CD8-positive, alpha-beta memory T cell (primary cell): ENCODE measurements at regions of chr19 and their contacts with region 1.

Region 1: GRCh38 chr19:12965017-12965811 is 4.2 kb upstream of the DAND5 start:
- DNase-seq: peak; percentile 71 to 83 (median 72)
- H3K4me3 ChIP-seq: peak overlapping the region; percentile 93
- H3K4me3 Mint-ChIP-seq: peak overlapping the region; percentile 17 to 92 (median 89)
- H3K27ac ChIP-seq: peak overlapping the region; percentile 64
- H3K27ac Mint-ChIP-seq: peak overlapping the region in 6 of 8 donors; percentile 1 to 86 (median 78)
- H3K4me1 ChIP-seq: no peaks in the 10 kb centered on the region
- H3K4me1 Mint-ChIP-seq: peaks cover 5 to 8% (median 5%) of the 10 kb centered on the region in 3 donors
- H3K27me3 ChIP-seq: no peaks in the 10 kb centered on the region
- H3K27me3 Mint-ChIP-seq: peaks cover 0 to 3% of the 10 kb centered on the region in 2 donors

Region 2: DNA sequence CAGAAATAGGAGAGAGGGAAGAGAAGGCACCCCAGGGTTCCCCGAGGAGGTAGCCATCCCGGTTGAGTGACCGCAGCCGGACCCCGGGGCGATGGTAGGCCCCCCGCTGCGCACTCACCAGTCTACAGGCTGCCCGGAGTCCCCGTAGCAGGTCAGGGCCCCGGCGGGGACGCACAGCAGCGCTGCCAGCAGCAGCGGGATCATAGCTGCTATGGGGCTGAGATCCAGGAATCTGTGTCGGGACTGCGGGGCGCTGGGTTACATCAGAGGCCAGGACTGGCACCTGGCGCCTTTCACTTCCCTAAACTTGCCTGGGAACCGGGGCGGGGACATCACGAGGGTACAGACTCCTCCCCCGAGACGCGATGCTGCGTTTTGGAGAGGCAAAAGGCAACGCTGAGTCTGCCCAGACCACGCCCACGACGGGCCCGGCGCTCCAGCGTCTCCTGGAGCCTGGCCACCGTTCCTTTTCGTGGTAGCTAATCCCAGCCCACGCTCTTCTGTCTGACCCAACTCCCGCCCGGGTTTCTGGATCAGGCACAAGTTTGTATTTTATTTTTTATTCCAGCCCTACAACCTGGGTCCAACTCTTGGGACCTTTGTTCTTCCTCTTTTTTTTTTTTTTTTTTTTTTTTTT is 83.9 kb before region 1 on chr19 and contains the start of gene DNASE2:
- CTCF ChIA-PET with region 1: interaction called, 117 read pairs
- POLR2A ChIA-PET with region 1: interaction called, 7 read pairs
- DNase-seq: peak; percentile 80 to 89 (median 84)
- H3K4me3 ChIP-seq: peak within 1 kb of the TSS; percentile 89
- H3K4me3 Mint-ChIP-seq: peak within 1 kb of the TSS; percentile 87 to 96 (median 89)
- H3K27ac ChIP-seq: peak within 1 kb of the TSS; percentile 83
- H3K27ac Mint-ChIP-seq: peak within 1 kb of the TSS; percentile 80 to 96 (median 92)
- H3K4me1 ChIP-seq: peaks cover 17% of the 10 kb centered on the region
- H3K4me1 Mint-ChIP-seq: peaks cover 23 to 39% (median 26%) of the 10 kb centered on the region in 3 donors
- H3K27me3 ChIP-seq: no peaks in the 10 kb centered on the region
- H3K27me3 Mint-ChIP-seq: no peaks in the 10 kb centered on the region
- total RNA-seq, gene DNASE2: 20.7 to 22.4 TPM

Region 3: DNA sequence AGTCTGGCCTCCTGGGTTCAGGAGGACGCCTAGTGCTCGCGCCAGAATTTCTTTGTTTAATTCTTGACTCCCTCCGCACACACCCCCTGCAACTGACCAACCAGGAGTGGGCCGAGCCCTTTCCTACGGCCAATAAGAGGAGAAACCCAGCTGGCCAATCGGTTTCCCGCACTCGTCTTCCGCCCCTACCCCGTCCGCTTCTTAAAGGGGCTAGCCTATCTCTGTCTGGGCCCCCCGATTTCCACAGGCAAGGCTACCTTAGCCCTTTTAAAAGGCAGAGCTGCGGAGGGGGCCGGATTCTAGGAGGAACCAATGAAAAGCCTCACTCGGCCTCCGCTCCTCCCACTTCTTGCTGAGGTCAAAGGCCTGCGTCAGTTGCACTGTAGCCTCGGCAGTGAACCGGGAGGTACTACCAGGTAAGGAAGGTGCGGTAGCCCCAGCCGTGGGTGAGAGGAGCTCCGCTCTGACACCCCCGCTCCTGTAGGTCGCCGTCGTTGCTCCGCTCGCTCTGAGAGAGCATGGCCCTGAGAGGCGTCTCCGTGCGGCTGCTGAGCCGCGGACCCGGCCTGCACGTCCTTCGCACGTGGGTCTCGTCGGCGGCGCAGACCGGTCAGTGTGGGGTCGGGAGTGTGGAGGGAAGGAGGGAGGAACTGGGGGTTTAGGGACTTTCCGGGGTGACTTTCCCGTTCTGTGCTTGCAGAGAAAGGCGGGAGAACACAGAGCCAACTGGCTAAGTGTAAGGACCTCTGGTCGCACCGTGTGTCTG is 74.2 kb before region 1 on chr19 and contains the start of gene GCDH:
- CTCF ChIA-PET with region 1: interaction called, 117 read pairs
- POLR2A ChIA-PET with region 1: interaction called, 7 read pairs
- DNase-seq: peak; percentile 92 to 98 (median 97)
- H3K4me3 ChIP-seq: peak within 1 kb of the TSS; percentile 87
- H3K4me3 Mint-ChIP-seq: peak within 1 kb of the TSS; percentile 93 to 100 (median 98)
- H3K27ac ChIP-seq: peak within 1 kb of the TSS; percentile 69
- H3K27ac Mint-ChIP-seq: peak within 1 kb of the TSS; percentile 82 to 99 (median 98)
- H3K4me1 ChIP-seq: peaks cover 12% of the 10 kb centered on the region
- H3K4me1 Mint-ChIP-seq: peaks cover 25 to 45% (median 27%) of the 10 kb centered on the region in 3 donors
- H3K27me3 ChIP-seq: no peaks in the 10 kb centered on the region
- H3K27me3 Mint-ChIP-seq: peaks cover 0 to 4% of the 10 kb centered on the region in 2 donors
- total RNA-seq, gene GCDH: 59.4 to 60.1 TPM

Region 4: DNA sequence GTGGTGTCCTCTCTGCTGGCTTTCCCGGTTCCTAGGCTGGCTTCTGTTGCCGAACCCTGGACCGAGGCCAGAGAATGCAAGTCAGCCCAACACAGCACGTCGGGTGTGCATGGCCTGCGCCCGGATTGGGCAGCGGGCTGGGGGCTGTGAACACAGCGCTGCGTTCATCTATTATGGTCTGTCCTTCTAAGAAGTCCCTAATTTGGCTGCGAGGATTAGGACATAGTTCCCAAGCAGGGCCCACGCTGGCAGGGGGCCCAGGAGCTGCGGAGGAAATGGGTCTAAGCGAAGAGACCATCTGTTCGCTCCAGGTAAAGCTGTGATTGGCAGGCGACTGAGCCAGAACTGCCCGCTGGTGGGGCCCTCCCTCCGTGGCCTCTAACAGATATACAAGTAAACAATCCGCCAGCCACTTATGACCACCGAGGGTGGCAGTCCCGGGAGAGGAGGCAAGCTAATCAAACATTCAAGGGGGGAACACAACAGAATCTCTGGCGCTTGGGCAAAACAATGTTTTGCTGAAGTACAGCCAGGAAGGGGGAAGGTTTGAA is 52.1 kb before region 1 on chr19:
- CTCF ChIA-PET with region 1: interaction called, 10 read pairs
- POLR2A ChIA-PET with region 1: no interaction called
- DNase-seq: no peak
- H3K4me3 ChIP-seq: no peak overlapping the region
- H3K4me3 Mint-ChIP-seq: no peak overlapping the region
- H3K27ac ChIP-seq: no peak overlapping the region
- H3K27ac Mint-ChIP-seq: peak overlapping the region in 3 of 8 donors; percentile 51 to 93 (median 93)
- H3K4me1 ChIP-seq: peaks cover 22% of the 10 kb centered on the region
- H3K4me1 Mint-ChIP-seq: peaks cover 19 to 29% (median 20%) of the 10 kb centered on the region in 3 donors
- H3K27me3 ChIP-seq: no peaks in the 10 kb centered on the region
- H3K27me3 Mint-ChIP-seq: peaks cover 0 to 2% of the 10 kb centered on the region in 2 donors

Region 5: GRCh38 chr19:12933287-12934072 is 31.7 kb before region 1 on chr19 and contains the start of gene FARSA:
- CTCF ChIA-PET with region 1: interaction called, 10 read pairs
- POLR2A ChIA-PET with region 1: interaction called, 4 read pairs
- DNase-seq: peak; percentile 74 to 89 (median 83)
- H3K4me3 ChIP-seq: peak within 1 kb of the TSS; percentile 89
- H3K4me3 Mint-ChIP-seq: peak within 1 kb of the TSS; percentile 92 to 99 (median 98)
- H3K27ac ChIP-seq: peak within 1 kb of the TSS; percentile 80
- H3K27ac Mint-ChIP-seq: peak within 1 kb of the TSS; percentile 77 to 97 (median 94)
- H3K4me1 ChIP-seq: peaks cover 37% of the 10 kb centered on the region
- H3K4me1 Mint-ChIP-seq: peaks cover 31 to 42% (median 34%) of the 10 kb centered on the region in 3 donors
- H3K27me3 ChIP-seq: no peaks in the 10 kb centered on the region
- H3K27me3 Mint-ChIP-seq: peaks cover 0 to 1% of the 10 kb centered on the region in 2 donors
- total RNA-seq, gene FARSA: 188 to 192 TPM

Region 6: DNA sequence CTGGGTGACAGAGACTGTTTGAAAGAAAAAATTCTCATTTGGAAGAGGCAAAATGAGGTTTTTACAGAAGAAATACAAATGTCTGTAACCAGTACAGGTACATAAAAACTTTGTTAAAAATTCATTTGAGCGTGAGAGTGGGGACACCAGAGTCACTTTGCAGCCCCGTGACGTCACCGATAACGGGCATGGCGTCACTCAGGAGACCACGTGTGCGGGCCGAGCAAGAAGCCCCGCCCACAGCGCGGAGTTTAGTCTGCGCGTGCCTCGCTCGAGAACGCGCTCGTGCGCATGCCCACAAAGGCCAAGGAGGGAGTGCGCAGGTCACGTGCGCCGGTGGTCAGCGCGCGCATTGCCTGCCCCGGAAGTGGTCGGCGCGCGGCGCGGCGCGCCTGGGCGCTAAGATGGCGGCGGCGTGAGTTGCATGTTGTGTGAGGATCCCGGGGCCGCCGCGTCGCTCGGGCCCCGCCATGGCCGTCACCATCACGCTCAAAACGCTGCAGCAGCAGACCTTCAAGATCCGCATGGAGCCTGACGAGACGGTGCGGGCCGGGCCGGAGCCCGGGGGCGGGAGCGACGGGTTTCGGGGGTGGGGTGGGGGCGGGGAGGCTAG is 19.6 kb before region 1 on chr19 and contains the start of gene RAD23A:
- CTCF ChIA-PET with region 1: interaction called, 20 read pairs
- POLR2A ChIA-PET with region 1: no interaction called
- DNase-seq: peak; percentile 98 to 99 (median 98)
- H3K4me3 ChIP-seq: peak within 1 kb of the TSS; percentile 73
- H3K4me3 Mint-ChIP-seq: peak within 1 kb of the TSS; percentile 87 to 96 (median 91)
- H3K27ac ChIP-seq: peak within 1 kb of the TSS; percentile 74
- H3K27ac Mint-ChIP-seq: peak within 1 kb of the TSS; percentile 95 to 98 (median 96)
- H3K4me1 ChIP-seq: peaks cover 31% of the 10 kb centered on the region
- H3K4me1 Mint-ChIP-seq: peaks cover 34 to 62% (median 38%) of the 10 kb centered on the region in 3 donors
- H3K27me3 ChIP-seq: no peaks in the 10 kb centered on the region
- H3K27me3 Mint-ChIP-seq: peaks cover 0 to 6% of the 10 kb centered on the region in 2 donors
- total RNA-seq, gene RAD23A: 227 to 230 TPM

Region 7: GRCh38 chr19:13093407-13094105 is 128.3 kb after region 1 on chr19:
- CTCF ChIA-PET with region 1: interaction called, 45 read pairs
- POLR2A ChIA-PET with region 1: no interaction called
- DNase-seq: peak; percentile 66 to 86 (median 72)
- H3K4me3 ChIP-seq: no peak overlapping the region
- H3K4me3 Mint-ChIP-seq: no peak overlapping the region
- H3K27ac ChIP-seq: no peak overlapping the region
- H3K27ac Mint-ChIP-seq: peak overlapping the region in 1 of 8 donors; percentile 6
- H3K4me1 ChIP-seq: peaks cover 29% of the 10 kb centered on the region
- H3K4me1 Mint-ChIP-seq: peaks cover 15 to 34% (median 16%) of the 10 kb centered on the region in 3 donors
- H3K27me3 ChIP-seq: peaks cover 17% of the 10 kb centered on the region
- H3K27me3 Mint-ChIP-seq: peaks cover 19 to 27% of the 10 kb centered on the region in 2 donors